ENCODE measurements at regions of chr3 and their contacts with region 1.

Region 1: GRCh38 chr3:194952841-194953241 is 267.2 kb downstream of the FAM43A start:
- DNase-seq: no peak
- ATAC-seq: no peak
- H3K4me3 ChIP-seq: no peak overlapping the region
- H3K27ac ChIP-seq: no peak overlapping the region
- H3K4me1 ChIP-seq: no peaks in the 10 kb centered on the region
- H3K27me3 ChIP-seq: no peaks in the 10 kb centered on the region
- CTCF ChIP-seq: no peak
- POLR2A ChIP-seq: no peak

Region 2: DNA sequence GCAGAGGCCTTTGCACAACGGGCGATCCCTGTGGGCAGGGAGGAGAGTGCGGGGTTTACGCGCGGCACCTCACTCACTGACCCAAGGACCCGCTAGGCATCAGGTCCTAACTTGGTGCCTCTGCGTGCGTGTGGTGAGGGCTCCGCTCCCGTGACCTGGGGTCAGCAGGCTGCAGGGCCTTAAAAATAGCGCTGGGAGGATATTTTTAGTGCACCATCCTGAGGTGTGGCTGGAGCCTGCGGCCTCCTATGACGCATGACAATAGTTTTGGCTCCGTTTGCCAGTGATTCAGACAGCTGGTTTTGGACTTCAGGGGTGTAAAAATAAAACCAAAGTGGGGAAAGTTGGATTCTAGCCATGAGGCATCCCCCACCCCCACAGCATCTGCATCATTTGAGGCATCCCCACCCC is 128.1 kb before region 1 on chr3:
- intact Hi-C with region 1: loop called (anchors 10 kb)
- DNase-seq: no peak
- ATAC-seq: no peak
- H3K4me3 ChIP-seq: no peak overlapping the region
- H3K27ac ChIP-seq: no peak overlapping the region
- H3K4me1 ChIP-seq: no peaks in the 10 kb centered on the region
- H3K27me3 ChIP-seq: no peaks in the 10 kb centered on the region
- CTCF ChIP-seq: no peak
- POLR2A ChIP-seq: no peak

Region 3: DNA sequence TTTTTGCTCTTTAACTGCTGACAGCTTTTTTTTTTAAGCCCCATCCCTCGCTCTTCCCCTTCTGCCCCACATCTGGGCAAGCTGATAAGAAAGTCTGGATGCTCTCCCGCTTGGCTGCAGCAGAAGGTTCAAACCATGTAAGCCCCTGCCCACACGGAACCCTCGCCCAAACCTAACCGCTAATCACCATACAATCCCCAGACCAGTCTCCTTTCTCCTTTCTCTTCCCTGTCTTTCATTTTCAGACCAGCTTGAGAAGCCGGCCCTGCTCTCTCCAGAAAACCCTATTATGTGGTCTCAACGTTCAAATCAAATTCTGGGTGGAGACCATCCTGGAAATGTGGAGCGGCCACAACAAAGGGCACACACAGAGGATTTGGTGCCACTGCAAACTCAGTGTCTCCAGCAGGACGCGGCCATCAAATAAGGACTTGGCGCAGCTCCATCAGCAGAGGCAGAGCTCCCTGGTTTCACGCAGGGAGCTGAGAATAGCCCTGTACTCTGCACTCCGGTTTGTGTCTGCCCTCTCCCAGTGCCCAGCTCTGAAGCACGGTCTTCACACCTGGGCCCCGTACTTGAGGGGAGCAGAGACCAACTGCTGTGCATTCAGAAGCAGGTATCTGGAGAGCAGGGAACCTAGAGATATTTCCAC is 225.4 kb after region 1 on chr3:
- intact Hi-C with region 1: no loop called
- DNase-seq: no peak
- ATAC-seq: no peak
- H3K4me3 ChIP-seq: no peak overlapping the region
- H3K27ac ChIP-seq: no peak overlapping the region
- H3K4me1 ChIP-seq: no peaks in the 10 kb centered on the region
- H3K27me3 ChIP-seq: no peaks in the 10 kb centered on the region
- CTCF ChIP-seq: no peak
- POLR2A ChIP-seq: no peak

Measured in body of pancreas (tissue), 4 donors.